HEK293 (cell line): ENCODE measurements at regions of chr21 and their contacts with region 1.

Region 1: GRCh38 chr21:37563641-37564340 is 197.2 kb downstream of the DYRK1A start:
- H3K4me3 ChIP-seq: peak overlapping the region; percentile 46
- H3K27ac ChIP-seq: peak overlapping the region; percentile 67
- H3K4me1 ChIP-seq: no peaks in the 10 kb centered on the region; the same call in 1 of the 2 replicates
- CTCF ChIP-seq: peak; percentile 98

Region 2: DNA sequence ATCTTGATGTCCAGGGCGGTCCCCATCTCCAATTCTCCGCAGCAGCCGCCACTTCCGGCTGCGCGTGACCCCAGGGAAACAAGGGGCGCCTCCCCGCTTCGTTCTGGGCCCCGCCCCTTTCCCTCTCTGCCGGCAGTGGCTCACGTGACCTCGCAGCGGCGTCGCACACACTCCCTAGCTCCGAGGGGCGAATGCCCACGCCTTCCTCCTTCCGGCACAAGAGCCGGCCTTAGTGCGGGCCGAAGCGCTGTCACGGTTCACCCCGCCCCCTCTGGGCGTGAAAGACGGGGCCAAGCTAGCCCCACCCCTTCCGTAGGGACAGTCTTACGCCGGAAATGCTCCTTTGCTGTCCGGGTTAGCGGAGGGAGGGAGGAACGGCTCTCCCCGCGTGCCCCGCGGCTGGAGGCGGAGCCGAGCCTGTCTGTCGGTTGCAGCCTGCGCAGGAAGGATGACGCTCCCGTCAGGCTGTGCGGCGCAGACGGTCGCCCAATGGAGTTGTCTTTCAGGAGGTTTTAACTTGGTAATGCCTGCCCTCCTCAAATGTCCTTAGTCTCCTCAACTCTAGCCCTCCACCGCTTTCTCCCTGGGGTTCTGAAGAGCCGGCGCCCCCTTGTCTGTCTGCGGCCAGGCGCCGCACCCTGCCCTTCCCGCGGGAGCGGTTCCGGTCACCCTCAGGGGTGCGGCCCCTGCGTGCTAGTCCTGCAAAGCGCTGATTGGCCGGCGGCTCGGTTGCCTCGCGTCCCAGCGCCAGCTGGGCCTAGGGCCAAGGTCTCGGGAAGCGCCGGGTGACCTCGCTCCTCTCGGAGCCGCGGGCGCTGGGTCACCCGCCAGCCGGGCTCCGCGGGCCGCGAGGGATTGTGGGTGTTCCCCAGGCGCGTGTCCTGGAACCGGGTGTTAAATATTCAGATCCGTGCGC is 296.3 kb before region 1 on chr21 and contains the start of gene VPS26C:
- CTCF ChIA-PET with region 1: no interaction called
- POLR2A ChIA-PET with region 1: interaction called, 23 read pairs
- H3K4me3 ChIP-seq: peak within 1 kb of the TSS; percentile 85
- H3K27ac ChIP-seq: peak within 1 kb of the TSS; percentile 96
- H3K4me1 ChIP-seq: peaks cover 5% of the 10 kb centered on the region; the same call in 1 of the 2 replicates
- CTCF ChIP-seq: no peak

Region 3: DNA sequence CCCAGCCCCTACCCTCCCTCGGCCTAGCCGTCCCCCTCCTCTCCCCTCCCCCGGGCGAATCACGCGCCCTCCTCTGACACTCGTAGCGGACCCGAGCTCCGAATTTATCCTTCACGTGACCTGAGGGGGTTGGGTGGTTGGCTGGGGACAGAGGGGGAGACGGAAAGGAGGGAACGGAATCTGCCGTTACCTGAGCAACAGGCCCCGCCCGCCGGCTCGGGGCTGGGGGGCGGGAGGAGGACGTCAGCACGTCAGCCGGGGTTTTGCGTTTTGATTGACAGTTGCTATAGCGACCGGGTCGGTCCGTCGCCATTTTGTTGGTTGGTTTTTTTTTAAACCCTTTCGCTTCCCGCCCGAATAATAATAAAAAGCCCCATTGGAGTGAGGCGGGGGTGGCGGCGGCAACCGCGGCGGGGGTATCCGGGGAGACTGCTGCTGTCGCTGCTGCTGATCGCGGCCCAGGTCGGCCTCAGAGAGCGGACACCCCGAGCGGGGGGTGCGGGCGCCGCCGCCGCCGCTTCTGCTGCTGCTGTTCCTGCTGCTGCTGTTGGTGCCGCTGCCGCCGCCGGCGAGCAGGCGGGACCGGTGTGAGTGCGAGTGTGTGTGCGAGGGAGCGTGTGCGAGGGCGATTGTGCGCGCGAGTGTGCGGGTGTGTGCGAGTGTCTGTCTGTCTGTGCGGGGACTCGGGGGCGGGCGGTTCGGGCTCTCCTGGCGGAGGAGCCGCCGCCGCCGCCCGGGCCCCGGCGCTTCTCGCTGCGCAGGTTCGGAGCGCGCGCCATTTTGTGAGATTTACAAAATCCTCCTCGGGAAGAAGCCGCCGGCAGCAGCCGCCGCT is 197.1 kb before region 1 on chr21 and contains the start of gene DYRK1A:
- CTCF ChIA-PET with region 1: no interaction called
- POLR2A ChIA-PET with region 1: interaction called, 15 read pairs
- H3K4me3 ChIP-seq: peak within 1 kb of the TSS; percentile 100
- H3K27ac ChIP-seq: peak within 1 kb of the TSS; percentile 100
- H3K4me1 ChIP-seq: peaks cover 17% of the 10 kb centered on the region
- CTCF ChIP-seq: peak; percentile 83

Region 4: GRCh38 chr21:37516998-37517397 is 46.8 kb before region 1 on chr21:
- CTCF ChIA-PET with region 1: interaction called, 3 read pairs
- POLR2A ChIA-PET with region 1: interaction called, 14 read pairs
- H3K4me3 ChIP-seq: no peak overlapping the region
- H3K27ac ChIP-seq: no peak overlapping the region
- H3K4me1 ChIP-seq: no peaks in the 10 kb centered on the region
- CTCF ChIP-seq: no peak

Region 5: DNA sequence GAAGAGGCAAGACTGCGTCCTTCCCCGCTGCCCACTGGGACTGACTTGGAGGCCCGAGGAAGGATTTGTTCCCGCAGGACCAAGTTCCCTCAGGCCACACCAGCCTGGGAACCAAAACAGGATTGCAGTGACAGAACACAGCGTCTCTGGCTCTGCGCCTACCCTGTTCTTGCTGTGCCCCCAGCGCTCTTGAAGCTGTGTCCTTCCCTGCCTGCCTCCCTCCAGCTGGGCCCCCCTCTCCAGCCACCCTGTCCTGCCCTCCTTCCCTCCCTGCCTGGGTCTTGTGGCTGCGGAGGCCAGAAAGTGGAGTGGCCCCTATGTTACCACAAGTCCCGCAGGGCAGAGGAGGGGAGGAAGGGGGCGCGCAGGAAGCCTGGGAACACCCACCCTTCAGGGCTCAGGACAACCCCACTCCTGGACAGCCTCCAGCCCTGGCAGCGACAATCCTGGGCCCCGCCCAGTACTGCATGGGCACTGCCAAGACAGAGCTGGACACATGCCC is 32.3 kb before region 1 on chr21:
- CTCF ChIA-PET with region 1: no interaction called
- POLR2A ChIA-PET with region 1: interaction called, 16 read pairs
- H3K4me3 ChIP-seq: no peak overlapping the region
- H3K27ac ChIP-seq: no peak overlapping the region
- H3K4me1 ChIP-seq: 0 out of 2 replicates have a peak, but pooled peaks cover 4% of the 10 kb centered on the region
- CTCF ChIP-seq: no peak

Region 6: GRCh38 chr21:37551331-37551992 is 12.3 kb before region 1 on chr21:
- CTCF ChIA-PET with region 1: interaction called, 5 read pairs
- POLR2A ChIA-PET with region 1: interaction called, 17 read pairs
- H3K4me3 ChIP-seq: no peak overlapping the region
- H3K27ac ChIP-seq: no peak overlapping the region
- H3K4me1 ChIP-seq: peaks cover 25% of the 10 kb centered on the region
- CTCF ChIP-seq: no peak